Vagina (tissue), 2 donors: ENCODE measurements at regions of chr5 and their contacts with region 1.

Region 1: DNA sequence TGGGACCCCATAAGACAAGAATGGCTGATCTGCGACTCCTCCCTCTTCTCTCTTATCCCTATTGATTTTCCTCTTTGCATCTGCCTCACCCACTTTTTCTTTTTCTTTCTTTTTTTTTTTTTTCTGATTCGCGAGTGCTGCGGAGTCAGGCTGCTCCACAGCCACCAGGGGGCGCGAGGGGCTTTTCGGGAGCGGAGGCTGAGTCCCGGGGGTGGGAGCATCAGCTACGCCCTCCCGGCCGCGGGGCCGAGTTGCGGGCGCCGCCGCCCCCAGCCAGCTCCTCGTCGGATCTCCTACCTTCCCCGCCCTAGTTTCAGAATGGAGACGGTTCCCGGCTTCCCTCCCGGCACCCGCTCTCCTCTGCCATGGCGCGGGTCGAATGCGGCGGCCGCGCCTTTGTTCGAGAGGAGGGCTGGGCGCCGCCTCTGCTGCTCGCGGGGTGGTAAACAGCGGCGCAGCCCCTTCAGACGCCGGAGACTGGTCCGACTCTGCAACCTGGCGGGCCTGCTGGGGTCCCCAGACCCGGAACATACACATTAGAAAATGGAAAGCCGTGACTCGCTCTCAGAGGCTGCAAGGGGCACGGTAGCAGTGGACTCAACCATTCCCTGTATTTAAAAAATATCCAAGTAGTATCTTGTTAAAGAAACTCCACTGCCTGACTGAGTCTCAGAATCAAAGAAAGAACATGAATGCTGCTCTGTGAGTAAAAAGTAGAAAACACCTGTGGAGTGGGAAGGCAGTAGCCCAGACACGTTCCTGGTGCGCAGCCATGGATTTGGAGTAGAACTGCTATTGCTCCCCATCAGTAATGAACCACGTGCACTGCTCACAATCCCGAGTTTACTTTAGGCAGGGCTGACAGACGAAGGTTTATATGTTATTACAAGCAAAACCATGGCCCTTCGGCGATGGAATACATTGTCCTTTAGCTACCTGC is 55.7 kb downstream of the DPYSL3 start:
- DNase-seq: no peak
- H3K4me3 ChIP-seq: peak overlapping the region; percentile 69 to 78
- H3K27ac ChIP-seq: peak overlapping the region; percentile 91
- H3K4me1 ChIP-seq: peaks cover 31% of the 10 kb centered on the region
- H3K27me3 ChIP-seq: no peaks in the 10 kb centered on the region
- CTCF ChIP-seq: peak; percentile 34 to 89 (median 61)
- POLR2A ChIP-seq: peak in 1 of 2 donors; percentile 22

Region 2: DNA sequence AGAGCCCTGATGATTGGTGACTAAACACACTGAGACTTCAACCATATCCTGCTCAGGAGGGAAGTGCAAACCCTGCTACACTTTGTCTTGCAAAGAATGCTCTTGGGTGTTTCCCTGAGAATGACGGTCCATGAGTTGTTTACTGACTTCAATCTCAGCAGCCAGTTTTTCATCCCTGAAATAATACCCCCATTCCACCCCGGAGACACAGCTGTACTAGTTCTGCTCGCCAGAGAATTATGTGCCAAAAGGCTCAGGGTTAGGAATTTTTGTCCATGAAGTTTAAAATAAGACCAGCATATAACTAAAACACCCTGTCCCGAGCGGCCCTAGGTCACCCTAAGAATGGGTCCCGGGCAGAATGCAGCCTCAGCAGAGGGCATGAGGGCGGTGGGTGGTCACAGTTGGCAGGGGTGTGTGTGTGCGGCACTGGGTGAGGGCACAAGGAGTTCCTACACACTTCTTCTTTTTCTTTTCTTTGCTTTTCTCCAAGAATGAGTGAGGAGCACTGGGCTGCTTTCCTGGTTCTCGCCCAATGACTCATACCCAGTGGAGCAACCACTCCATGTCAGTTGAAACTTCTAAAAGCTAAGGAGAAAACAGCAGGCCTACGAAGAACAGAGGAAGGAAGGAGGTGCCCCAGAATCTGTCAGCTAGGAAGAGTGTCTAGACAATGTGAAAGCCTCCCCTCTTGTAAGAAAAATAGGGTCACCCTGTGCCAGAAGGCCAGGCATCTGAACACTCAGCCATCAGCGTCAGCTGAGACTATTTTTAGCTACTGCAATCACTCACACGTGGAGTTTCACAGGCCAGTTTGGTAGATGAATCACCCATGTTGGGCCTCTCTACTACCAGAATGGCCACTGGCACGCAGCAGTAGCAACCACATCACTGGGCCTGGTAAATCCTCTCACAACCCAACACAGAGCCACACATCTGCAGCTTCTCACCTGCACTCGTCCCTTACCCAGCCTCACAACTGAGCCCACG is 50.2 kb before region 1 on chr5:
- intact Hi-C with region 1: loop called (anchors 5 kb)
- DNase-seq: peak in 1 of 2 donors; percentile 96
- H3K4me3 ChIP-seq: no peak overlapping the region
- H3K27ac ChIP-seq: peak overlapping the region; percentile 98
- H3K4me1 ChIP-seq: peaks cover 25% of the 10 kb centered on the region
- H3K27me3 ChIP-seq: no peaks in the 10 kb centered on the region
- CTCF ChIP-seq: no peak
- POLR2A ChIP-seq: no peak

Region 3: DNA sequence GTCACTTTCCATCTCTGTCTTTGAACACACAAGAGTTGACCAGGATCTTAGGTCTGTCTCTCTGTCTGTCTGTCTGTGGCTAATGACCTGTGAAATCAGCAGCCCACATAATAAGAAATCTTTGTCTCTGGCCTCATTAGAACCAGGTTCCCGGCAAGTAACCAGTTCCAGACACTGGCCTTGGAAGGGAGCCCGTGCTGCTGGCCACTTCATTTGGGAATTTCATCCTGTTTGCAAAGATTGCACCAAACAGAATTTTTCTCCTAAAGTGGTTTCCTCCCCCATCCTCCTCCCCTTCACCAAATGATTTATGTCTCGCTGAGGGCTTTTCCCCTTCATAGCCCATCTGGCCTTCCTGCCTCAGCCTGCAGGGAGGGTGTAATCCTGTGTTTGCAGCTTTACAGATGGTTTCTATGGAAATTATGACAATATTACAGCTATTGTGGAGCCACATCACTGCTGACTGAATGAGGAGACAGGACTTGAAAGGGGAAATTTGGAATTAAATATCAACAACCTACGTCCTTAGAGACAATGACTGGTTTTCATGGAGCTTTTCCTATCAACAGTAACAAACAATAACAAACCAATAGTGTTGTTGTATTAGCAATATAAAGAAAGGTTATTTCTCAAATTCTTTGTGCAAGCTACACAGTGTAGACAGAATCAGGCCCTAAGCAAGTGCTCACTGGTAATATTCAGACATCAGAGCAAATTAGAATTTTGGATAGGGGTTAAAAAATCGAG is 30.0 kb after region 1 on chr5:
- intact Hi-C with region 1: loop called (anchors 1 kb)
- DNase-seq: no peak
- H3K4me3 ChIP-seq: no peak overlapping the region
- H3K27ac ChIP-seq: peak overlapping the region; percentile 70
- H3K4me1 ChIP-seq: peaks cover 42% of the 10 kb centered on the region
- H3K27me3 ChIP-seq: no peaks in the 10 kb centered on the region
- CTCF ChIP-seq: no peak
- POLR2A ChIP-seq: no peak

Region 4: GRCh38 chr5:147558826-147559225 is 104.7 kb after region 1 on chr5:
- intact Hi-C with region 1: loop called (anchors 2 kb)
- DNase-seq: no peak
- H3K4me3 ChIP-seq: no peak overlapping the region
- H3K27ac ChIP-seq: no peak overlapping the region
- H3K4me1 ChIP-seq: peaks cover 14% of the 10 kb centered on the region
- H3K27me3 ChIP-seq: no peaks in the 10 kb centered on the region
- CTCF ChIP-seq: peak; percentile 42 to 65 (median 53)
- POLR2A ChIP-seq: no peak

Region 5: GRCh38 chr5:147576646-147577535 is 122.7 kb after region 1 on chr5:
- intact Hi-C with region 1: loop called (anchors 5 kb)
- DNase-seq: no peak
- H3K4me3 ChIP-seq: no peak overlapping the region
- H3K27ac ChIP-seq: no peak overlapping the region
- H3K4me1 ChIP-seq: no peaks in the 10 kb centered on the region
- H3K27me3 ChIP-seq: no peaks in the 10 kb centered on the region
- CTCF ChIP-seq: peak; percentile 41 to 74 (median 54)
- POLR2A ChIP-seq: no peak